IMR-90 (cell line): ENCODE measurements at regions of chr15 and their contacts with region 1.

Region 1: DNA sequence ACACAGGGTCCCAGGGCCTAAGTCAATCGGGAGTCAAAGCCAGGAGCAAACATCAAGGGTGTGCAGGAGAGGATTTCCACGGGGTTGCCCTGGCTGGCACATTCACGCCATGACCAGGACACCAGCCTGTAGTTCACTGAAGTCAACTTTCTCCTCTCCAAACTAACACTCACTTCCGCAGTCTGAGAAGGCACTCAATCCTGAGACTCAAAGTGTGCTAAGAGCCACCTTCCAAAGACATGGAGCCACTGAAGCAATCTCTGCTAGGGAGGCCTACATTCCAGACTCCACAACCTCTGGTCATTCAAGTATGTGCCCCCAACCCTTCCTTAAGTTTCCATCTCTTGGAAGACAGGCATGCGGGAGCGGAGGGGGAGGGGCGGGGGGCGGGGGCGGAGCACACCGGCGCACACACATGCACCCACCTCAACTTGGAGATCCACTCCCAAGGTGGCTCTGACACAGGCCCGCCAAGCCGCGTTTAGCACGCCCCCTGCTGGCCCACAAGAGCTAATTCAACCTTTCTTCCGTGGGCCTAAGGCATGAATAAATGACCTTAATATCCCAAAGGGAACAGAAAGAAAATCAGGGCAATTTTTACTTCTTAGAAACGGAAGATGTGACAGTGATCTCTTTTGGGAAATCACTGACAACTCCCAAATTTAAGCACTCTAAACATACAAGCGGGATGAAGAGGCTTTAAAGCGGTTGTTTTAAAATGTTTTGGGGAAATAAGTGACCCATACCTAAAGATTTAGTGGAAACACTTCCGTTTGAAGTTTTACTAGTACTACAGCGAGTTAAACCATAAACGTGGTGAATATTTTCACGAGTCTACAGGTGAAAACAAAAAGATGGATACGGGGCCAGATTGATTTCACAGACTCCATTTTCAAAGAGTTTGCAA is 162.5 kb upstream of the CHRNA7 start:
- DNase-seq: peak; percentile 38
- ATAC-seq: peak; percentile 25; the same call in 1 of the 2 replicates
- H3K4me3 ChIP-seq: no peak overlapping the region
- H3K27ac ChIP-seq: no peak overlapping the region
- H3K4me1 ChIP-seq: no peaks in the 10 kb centered on the region
- H3K27me3 ChIP-seq: peaks cover 5% of the 10 kb centered on the region; the same call in 1 of the 2 replicates
- CTCF ChIP-seq: peak; percentile 68
- POLR2A ChIP-seq: no peak
- RAD21 ChIP-seq: peak; percentile 56

Region 2: GRCh38 chr15:31292391-31293015 is 575.3 kb before region 1 on chr15:
- CTCF ChIA-PET with region 1: no interaction called
- POLR2A ChIA-PET with region 1: no interaction called
- dilution Hi-C with region 1: no loop called
- in situ Hi-C with region 1: no loop called
- intact Hi-C with region 1: no loop called
- DNase-seq: no peak
- ATAC-seq: no peak
- H3K4me3 ChIP-seq: no peak overlapping the region
- H3K27ac ChIP-seq: no peak overlapping the region
- H3K4me1 ChIP-seq: no peaks in the 10 kb centered on the region; the same call in 1 of the 2 replicates
- H3K27me3 ChIP-seq: peaks cover 24% of the 10 kb centered on the region
- CTCF ChIP-seq: no peak
- POLR2A ChIP-seq: no peak
- RAD21 ChIP-seq: no peak

Region 3: DNA sequence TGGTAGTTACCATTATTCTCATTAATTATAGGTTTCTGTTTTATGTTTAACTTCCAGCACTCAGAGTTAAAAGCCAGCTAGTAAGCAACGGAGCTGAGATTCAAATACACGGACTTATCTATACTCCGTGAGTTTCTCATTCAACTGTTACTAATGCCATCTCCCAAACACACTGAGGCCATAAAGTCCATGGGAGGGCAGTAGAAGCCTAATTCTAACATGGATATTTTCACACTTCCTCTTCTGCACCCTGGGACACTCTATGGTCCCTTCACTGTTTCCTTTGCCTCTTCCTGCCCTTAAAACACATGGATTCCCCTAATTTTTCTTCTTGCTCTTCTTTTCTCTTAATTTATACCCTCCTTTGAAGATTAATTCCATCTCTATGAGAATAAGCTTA is 296.1 kb before region 1 on chr15:
- CTCF ChIA-PET with region 1: no interaction called
- POLR2A ChIA-PET with region 1: no interaction called
- dilution Hi-C with region 1: no loop called
- in situ Hi-C with region 1: no loop called
- intact Hi-C with region 1: loop called (anchors 2 kb)
- DNase-seq: peak; percentile 21
- ATAC-seq: peak; percentile 73
- H3K4me3 ChIP-seq: no peak overlapping the region
- H3K27ac ChIP-seq: no peak overlapping the region
- H3K4me1 ChIP-seq: 0 out of 2 replicates have a peak, but pooled peaks cover 1% of the 10 kb centered on the region
- H3K27me3 ChIP-seq: no peaks in the 10 kb centered on the region; the same call in 1 of the 2 replicates
- CTCF ChIP-seq: peak; percentile 54
- POLR2A ChIP-seq: no peak
- RAD21 ChIP-seq: peak; percentile 62

Region 4: GRCh38 chr15:31660816-31661215 is 207.0 kb before region 1 on chr15:
- CTCF ChIA-PET with region 1: no interaction called
- POLR2A ChIA-PET with region 1: no interaction called
- dilution Hi-C with region 1: no loop called
- in situ Hi-C with region 1: no loop called
- intact Hi-C with region 1: loop called (anchors 10 kb)
- DNase-seq: no peak
- ATAC-seq: no peak
- H3K4me3 ChIP-seq: no peak overlapping the region
- H3K27ac ChIP-seq: no peak overlapping the region
- H3K4me1 ChIP-seq: no peaks in the 10 kb centered on the region
- H3K27me3 ChIP-seq: no peaks in the 10 kb centered on the region
- CTCF ChIP-seq: no peak
- POLR2A ChIP-seq: no peak
- RAD21 ChIP-seq: no peak

Region 5: GRCh38 chr15:31824024-31824423 is 43.8 kb before region 1 on chr15:
- CTCF ChIA-PET with region 1: no interaction called
- POLR2A ChIA-PET with region 1: no interaction called
- dilution Hi-C with region 1: no loop called
- in situ Hi-C with region 1: no loop called
- intact Hi-C with region 1: no loop called
- DNase-seq: no peak
- ATAC-seq: no peak
- H3K4me3 ChIP-seq: no peak overlapping the region
- H3K27ac ChIP-seq: no peak overlapping the region
- H3K4me1 ChIP-seq: no peaks in the 10 kb centered on the region
- H3K27me3 ChIP-seq: no peaks in the 10 kb centered on the region
- CTCF ChIP-seq: no peak
- POLR2A ChIP-seq: no peak
- RAD21 ChIP-seq: no peak